OCI-LY7 (cell line): ENCODE measurements at regions of chr12 and their contacts with region 1.

Region 1: DNA sequence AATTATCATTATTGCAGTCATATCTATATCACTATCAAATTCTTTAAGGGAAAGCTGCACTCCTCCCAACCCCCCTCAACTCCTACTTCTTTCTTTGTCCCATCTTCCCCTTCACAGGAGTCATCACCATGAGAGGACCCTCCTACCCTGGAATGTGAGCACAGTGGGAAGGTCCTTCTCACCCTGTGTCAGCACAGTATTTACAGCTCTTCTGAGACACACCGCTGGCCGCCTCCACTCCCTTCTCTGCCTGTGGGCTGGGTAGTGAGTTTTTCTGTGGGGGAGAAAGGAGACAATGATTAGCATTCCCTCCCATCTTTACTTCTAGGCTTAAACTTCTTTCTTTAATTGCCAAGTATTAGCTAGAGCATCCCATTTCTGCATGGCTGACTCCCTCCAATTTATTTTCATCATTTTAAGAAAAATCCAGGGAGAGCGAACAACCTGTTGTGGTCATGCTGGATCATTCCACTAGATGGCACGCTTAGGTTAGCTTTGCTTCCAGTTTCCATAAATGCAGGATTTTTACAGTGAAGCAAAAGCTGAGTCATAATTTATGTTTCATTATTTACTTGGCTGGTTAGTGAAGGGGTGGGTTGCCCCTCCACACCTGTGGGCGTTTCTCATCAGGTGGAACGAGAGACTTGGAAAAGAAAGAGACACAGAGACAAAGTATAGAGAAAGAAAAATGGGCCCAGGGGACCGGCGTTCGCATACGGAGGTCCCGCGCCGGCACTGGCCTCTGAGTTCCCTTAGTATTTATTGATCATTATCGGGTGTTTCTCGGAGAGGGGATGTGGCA is 188.5 kb downstream of the ALX1 start:
- DNase-seq: peak; percentile 50
- H3K4me3 ChIP-seq: no peak overlapping the region
- H3K27ac ChIP-seq: no peak overlapping the region
- H3K4me1 ChIP-seq: peaks cover 8% of the 10 kb centered on the region
- CTCF ChIP-seq: peak; percentile 80

Region 2: DNA sequence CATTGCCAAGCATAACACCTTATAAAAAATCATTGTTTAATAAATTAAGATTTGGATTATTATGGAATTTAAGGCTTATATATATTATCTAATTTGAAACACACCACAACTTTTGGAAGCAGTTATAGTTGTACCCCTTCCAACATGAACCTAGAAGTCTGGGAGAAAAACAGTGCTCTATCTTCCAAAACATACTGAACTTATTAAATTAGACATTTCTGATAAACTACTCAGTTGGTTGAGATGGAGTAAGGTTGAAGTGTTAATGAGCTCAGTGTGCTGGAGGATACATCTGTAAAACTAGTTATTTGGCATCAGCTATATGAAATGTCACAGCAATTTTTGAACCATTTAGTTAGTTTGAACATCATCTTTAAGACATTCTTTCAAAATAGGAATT is 38.9 kb after region 1 on chr12:
- CTCF ChIA-PET with region 1: no interaction called
- POLR2A ChIA-PET with region 1: no interaction called
- intact Hi-C with region 1: loop called (anchors 1 kb)
- DNase-seq: no peak
- H3K4me3 ChIP-seq: no peak overlapping the region
- H3K27ac ChIP-seq: no peak overlapping the region
- H3K4me1 ChIP-seq: no peaks in the 10 kb centered on the region
- CTCF ChIP-seq: no peak

Region 3: GRCh38 chr12:85872497-85873091 is 404.0 kb after region 1 on chr12:
- CTCF ChIA-PET with region 1: no interaction called
- POLR2A ChIA-PET with region 1: interaction called, 3 read pairs
- intact Hi-C with region 1: loop called (anchors 5 kb)
- DNase-seq: peak; percentile 67
- H3K4me3 ChIP-seq: no peak overlapping the region
- H3K27ac ChIP-seq: no peak overlapping the region
- H3K4me1 ChIP-seq: no peaks in the 10 kb centered on the region
- CTCF ChIP-seq: peak; percentile 88